Tibial artery (tissue), 4 donors: ENCODE measurements at regions of chr3 and their contacts with region 1.

Region 1: DNA sequence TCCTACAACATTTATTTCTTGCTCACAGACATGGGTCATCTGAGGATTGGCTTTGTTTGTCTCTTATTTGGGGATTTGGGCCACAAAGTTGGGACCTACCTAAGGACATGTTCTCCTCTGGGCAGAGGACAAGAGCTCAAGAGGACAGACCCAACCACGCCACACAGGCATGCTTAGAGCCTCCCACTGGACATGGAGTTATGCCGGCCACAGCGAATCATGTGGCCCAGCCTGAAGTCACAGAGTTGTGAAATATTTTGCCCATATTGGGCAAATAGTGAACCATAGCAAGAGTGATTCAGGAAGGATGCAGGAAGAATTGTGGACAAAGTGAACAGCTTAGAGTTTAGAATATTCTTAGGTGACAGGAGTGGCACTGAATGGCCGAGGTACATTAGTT is 9.9 kb downstream of the TRAK1 start:
- DNase-seq: peak; percentile 80 to 86
- H3K4me3 ChIP-seq: no peak overlapping the region
- H3K27ac ChIP-seq: peak overlapping the region; percentile 67 to 75
- H3K4me1 ChIP-seq: peaks cover 0 to 60% (median 40%) of the 10 kb centered on the region in 4 donors
- H3K27me3 ChIP-seq: no peaks in the 10 kb centered on the region
- CTCF ChIP-seq: no peak

Region 2: DNA sequence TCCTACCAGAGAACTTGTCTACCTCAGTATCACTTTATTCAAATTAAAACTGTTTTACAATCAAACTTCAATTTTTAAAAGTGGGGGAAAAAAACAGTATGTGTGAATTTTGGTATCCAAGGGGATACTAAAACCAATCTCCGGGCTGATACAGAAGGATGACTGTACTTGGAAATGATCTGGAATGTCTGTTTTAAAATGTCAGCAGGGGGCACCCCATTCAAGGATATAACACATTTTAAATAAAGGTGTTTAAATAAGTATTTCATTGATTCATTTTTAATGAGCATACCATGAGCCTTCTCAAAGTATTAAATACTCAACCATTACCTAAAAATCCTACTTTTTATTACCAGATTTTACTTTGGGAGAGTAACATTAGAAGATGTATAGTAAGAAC is 207.1 kb before region 1 on chr3:
- intact Hi-C with region 1: loop called (anchors 5 kb)
- DNase-seq: no peak
- H3K4me3 ChIP-seq: no peak overlapping the region
- H3K27ac ChIP-seq: no peak overlapping the region
- H3K4me1 ChIP-seq: no peaks in the 10 kb centered on the region
- H3K27me3 ChIP-seq: no peaks in the 10 kb centered on the region
- CTCF ChIP-seq: peak; percentile 43 to 58

Region 3: GRCh38 chr3:41907330-41908073 is 193.5 kb before region 1 on chr3:
- intact Hi-C with region 1: no loop called
- DNase-seq: no peak
- H3K4me3 ChIP-seq: no peak overlapping the region
- H3K27ac ChIP-seq: no peak overlapping the region
- H3K4me1 ChIP-seq: no peaks in the 10 kb centered on the region
- H3K27me3 ChIP-seq: no peaks in the 10 kb centered on the region
- CTCF ChIP-seq: no peak

Region 4: DNA sequence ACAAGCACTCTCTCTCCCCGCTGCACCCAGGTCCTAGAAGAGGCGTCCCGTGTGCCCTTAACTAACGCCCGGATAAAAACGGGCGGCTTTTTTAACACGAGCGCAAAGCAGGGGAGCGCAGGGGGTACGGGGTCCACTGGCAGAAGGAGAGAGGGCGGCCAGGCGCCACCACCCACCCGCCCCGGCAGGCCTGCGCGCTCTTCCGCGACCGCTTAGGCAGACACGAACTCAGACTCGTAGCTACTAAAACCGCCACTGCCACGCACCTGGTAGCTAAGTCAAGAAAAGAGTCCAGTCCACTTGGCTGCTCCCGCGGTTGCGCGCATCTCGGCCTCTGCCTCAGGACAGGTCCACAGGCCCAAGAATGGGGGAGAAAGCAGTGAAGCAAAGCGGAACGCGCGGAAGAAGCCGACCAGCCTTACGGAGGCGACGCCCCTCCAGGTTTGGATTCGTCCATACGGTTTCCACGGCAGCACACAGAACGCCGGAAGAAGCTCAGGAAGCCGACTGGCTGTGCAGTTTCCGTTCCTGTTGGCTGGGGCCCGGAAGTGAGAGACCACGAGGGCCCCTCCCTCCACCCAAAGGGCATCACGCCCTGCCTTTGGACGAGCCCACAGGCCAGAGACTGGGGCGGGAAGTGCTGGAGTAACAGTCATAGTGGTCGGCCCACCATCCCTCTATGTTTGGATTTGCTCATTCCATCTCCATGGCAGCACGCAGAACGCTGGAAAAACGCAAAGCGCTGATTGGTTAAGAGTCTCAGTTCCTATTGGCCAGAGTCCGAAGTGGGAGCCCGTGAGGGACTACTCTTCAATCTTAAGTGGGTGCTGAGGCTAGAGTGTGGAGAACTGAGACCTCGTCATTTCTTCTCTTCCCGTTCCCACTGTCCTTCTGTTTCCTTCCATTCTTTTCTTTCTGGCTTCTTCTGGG is 139.0 kb before region 1 on chr3 and contains the start of gene ULK4:
- intact Hi-C with region 1: loop called (anchors 5 kb)
- DNase-seq: peak; percentile 97 to 99
- H3K4me3 ChIP-seq: peak within 1 kb of the TSS; percentile 82 to 91
- H3K27ac ChIP-seq: peak within 1 kb of the TSS; percentile 77 to 83
- H3K4me1 ChIP-seq: peaks cover 0 to 11% (median 3%) of the 10 kb centered on the region in 4 donors
- H3K27me3 ChIP-seq: no peaks in the 10 kb centered on the region
- CTCF ChIP-seq: peak in 1 of 2 experiments; percentile 26

Region 5: DNA sequence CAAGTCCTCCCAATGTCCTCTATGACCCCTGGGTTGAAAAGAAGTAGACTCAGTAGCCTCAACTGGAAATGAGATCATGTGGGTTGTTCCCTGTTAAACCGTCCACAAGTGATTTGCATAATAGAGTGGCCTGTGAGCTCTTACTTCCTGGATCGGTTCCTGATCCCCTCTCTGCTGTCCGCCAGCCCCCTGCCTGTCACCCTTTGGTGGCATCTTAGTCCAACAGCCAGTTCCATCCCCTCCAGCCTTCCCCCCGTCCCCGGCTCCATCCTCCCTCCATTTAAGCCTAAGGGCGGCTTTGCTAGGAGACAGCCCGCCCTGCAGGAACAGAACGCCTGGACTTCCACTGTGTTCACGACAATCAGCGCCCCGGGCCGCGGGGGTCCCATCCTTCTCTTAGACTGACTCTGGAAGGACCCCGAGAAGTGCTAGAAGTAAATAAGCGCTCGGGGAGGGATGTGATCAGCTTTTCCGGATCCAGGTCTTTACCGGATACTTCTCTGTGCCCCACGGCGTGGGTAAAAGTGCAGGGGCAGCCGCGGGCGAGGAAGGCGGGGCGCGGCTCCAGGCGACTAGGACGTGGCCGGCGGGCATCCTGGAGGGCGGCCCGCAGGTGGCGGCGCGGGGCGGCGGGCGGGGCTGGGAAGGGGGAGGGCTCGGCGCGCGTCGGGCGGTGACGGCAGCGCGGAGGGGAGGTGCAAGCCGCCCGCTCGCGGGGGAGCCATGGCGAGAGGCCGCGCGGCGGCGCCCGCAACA is 87.9 kb before region 1 on chr3:
- intact Hi-C with region 1: loop called (anchors 5 kb)
- DNase-seq: peak; percentile 53 to 81
- H3K4me3 ChIP-seq: peak overlapping the region; percentile 73 to 88
- H3K27ac ChIP-seq: peak overlapping the region; percentile 74 to 82
- H3K4me1 ChIP-seq: peaks cover 0 to 33% (median 16%) of the 10 kb centered on the region in 4 donors
- H3K27me3 ChIP-seq: no peaks in the 10 kb centered on the region
- CTCF ChIP-seq: no peak

Region 6: GRCh38 chr3:42556089-42556632 is 455.1 kb after region 1 on chr3:
- intact Hi-C with region 1: no loop called
- DNase-seq: no peak
- H3K4me3 ChIP-seq: no peak overlapping the region
- H3K27ac ChIP-seq: no peak overlapping the region
- H3K4me1 ChIP-seq: peaks cover 0 to 11% (median 2%) of the 10 kb centered on the region in 4 donors
- H3K27me3 ChIP-seq: no peaks in the 10 kb centered on the region
- CTCF ChIP-seq: no peak